ENCODE measurements at regions of chr5 and their contacts with region 1.

Region 1: DNA sequence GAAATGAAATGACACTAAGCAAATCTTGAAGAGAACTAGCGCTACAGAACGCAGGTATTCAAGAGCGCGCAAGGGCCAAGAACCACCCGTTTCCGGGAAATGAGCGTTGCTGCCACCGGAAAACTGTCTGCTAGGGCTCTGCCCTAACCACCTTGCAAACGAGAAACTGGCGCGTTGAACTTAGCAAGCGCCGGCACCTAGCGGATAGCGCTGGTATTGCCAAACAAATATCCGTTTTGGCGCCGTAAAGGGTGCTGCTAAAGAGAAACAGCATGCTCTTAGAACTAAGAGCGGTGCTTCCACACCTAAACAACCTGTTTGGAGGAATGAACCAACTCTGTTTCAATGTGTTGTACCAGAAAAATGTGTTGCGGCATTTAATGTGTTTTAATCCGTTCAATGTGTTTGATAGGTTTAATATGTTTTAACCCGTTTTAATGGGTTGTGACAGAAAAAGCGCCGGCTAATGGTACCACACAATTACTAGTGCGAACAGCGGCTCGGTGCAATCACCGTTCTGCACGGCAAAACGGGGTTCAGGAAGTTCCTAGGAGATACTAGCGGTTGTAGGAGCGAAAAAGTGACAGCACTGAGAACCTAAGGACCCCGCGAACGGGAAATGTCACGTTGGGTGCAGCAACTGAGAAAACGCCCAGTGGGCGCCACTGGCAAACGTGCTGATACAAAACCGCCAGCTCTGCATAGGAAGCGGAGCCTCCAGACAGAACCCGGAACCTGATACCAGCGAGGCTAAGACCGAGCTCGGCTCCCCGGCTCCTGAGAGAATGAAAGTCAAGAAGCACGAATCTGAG is at the start of gene ANXA2R:
- DNase-seq: peak; percentile 97
- H3K4me3 ChIP-seq: peak within 1 kb of the TSS; percentile 51 to 87 (median 54)
- H3K27ac ChIP-seq: peak within 1 kb of the TSS; percentile 77
- H3K4me1 ChIP-seq: peaks cover 30% of the 10 kb centered on the region
- H3K27me3 ChIP-seq: no peaks in the 10 kb centered on the region
- CTCF ChIP-seq: peak; percentile 81 to 86
- POLR2A ChIP-seq: no peak
- total RNA-seq, gene ANXA2R: 6.6 and 8.1 TPM in 2 replicates

Region 2: GRCh38 chr5:42994246-42995151 is 46.0 kb before region 1 on chr5:
- CTCF ChIA-PET with region 1: interaction called, 59 read pairs
- POLR2A ChIA-PET with region 1: interaction called, 7 read pairs
- dilution Hi-C with region 1: no loop called
- intact Hi-C with region 1: loop called (anchors 1 kb)
- DNase-seq: peak; percentile 96
- H3K4me3 ChIP-seq: peak overlapping the region; percentile 59 to 94 (median 61)
- H3K27ac ChIP-seq: peak overlapping the region; percentile 98
- H3K4me1 ChIP-seq: peaks cover 30% of the 10 kb centered on the region
- H3K27me3 ChIP-seq: no peaks in the 10 kb centered on the region
- CTCF ChIP-seq: peak; percentile 85 to 86
- POLR2A ChIP-seq: peak; percentile 52

Region 3: GRCh38 chr5:43008369-43009153 is 31.9 kb before region 1 on chr5:
- CTCF ChIA-PET with region 1: interaction called, 27 read pairs
- POLR2A ChIA-PET with region 1: no interaction called
- dilution Hi-C with region 1: no loop called
- intact Hi-C with region 1: loop called (anchors 1 kb)
- DNase-seq: peak; percentile 96
- H3K4me3 ChIP-seq: peak overlapping the region; percentile 45 to 77 (median 75)
- H3K27ac ChIP-seq: peak overlapping the region; percentile 90
- H3K4me1 ChIP-seq: peaks cover 26% of the 10 kb centered on the region
- H3K27me3 ChIP-seq: no peaks in the 10 kb centered on the region
- CTCF ChIP-seq: peak in 1 of 2 donors; percentile 28
- POLR2A ChIP-seq: peak; percentile 66

Region 4: GRCh38 chr5:43061352-43062075 is 21.0 kb after region 1 on chr5:
- CTCF ChIA-PET with region 1: interaction called, 63 read pairs
- POLR2A ChIA-PET with region 1: no interaction called
- dilution Hi-C with region 1: no loop called
- intact Hi-C with region 1: loop called (anchors 1 kb)
- DNase-seq: no peak
- H3K4me3 ChIP-seq: no peak overlapping the region
- H3K27ac ChIP-seq: no peak overlapping the region
- H3K4me1 ChIP-seq: peaks cover 5% of the 10 kb centered on the region
- H3K27me3 ChIP-seq: no peaks in the 10 kb centered on the region
- CTCF ChIP-seq: no peak
- POLR2A ChIP-seq: no peak

Region 5: DNA sequence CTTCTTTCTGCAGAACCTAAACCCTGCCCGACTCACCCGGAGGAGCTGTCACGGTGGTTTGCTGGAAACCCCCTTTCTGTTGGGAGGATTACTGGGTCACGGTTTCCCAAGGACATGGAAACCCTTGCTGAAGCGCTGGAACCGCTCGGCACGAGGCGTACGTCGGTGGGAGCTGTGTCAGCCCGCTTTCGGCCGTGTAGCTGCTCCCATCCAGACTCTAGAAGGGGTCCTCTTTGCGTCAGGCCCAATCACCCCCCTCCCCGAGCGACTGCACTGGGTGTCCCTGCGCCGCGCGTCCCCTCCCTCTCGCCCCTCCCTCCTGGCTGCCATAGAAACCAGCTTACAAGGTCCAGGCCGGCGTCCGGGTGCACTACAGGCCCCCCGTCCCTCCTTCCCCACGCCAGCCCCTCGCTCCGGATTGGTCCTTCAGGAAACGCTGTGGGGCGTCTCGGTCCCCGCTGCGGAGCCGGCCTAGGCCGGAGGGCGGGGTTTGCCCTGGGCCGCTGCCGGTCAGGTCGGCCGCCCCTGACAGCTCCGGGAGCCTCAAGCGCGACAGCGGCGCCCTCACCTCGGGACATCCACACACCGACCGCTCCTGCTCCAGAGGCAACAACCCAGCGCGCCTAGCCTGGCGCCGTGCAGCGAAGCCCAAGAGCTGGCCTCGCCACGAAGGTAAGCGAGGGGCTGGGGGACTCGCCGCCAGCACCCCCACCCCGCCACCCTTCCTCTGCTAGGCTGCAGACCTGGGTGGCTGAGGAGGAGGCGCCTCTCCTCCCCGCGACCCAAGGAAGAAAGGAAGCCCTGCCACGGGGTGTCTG is 151.5 kb after region 1 on chr5 and contains the start of gene NIM1K:
- CTCF ChIA-PET with region 1: no interaction called
- POLR2A ChIA-PET with region 1: no interaction called
- dilution Hi-C with region 1: no loop called
- intact Hi-C with region 1: no loop called
- DNase-seq: peak; percentile 23
- H3K4me3 ChIP-seq: peak within 1 kb of the TSS in 2 of 3 experiments; percentile 12 to 32
- H3K27ac ChIP-seq: no peak within 1 kb of the TSS
- H3K4me1 ChIP-seq: peaks cover 4% of the 10 kb centered on the region
- H3K27me3 ChIP-seq: peaks cover 11 to 35% of the 10 kb centered on the region in 2 experiments
- CTCF ChIP-seq: no peak
- POLR2A ChIP-seq: no peak
- total RNA-seq, gene NIM1K: 0.49 TPM in 1 of 2 replicates, not detected in the other

Measured in endothelial cell of umbilical vein (primary cell).